ENCODE measurements at regions of chr4 and their contacts with region 1.

Region 1: GRCh38 chr4:83124111-83124780 is 9.7 kb upstream of the PLAC8 start:
- DNase-seq: no peak
- ATAC-seq: peak; percentile 93
- H3K4me3 Mint-ChIP-seq: peak overlapping the region; percentile 56
- H3K27ac Mint-ChIP-seq: peak overlapping the region; percentile 81
- H3K4me1 Mint-ChIP-seq: peaks cover 47% of the 10 kb centered on the region
- H3K27me3 Mint-ChIP-seq: no peaks in the 10 kb centered on the region
- CTCF ChIP-seq: no peak

Region 2: DNA sequence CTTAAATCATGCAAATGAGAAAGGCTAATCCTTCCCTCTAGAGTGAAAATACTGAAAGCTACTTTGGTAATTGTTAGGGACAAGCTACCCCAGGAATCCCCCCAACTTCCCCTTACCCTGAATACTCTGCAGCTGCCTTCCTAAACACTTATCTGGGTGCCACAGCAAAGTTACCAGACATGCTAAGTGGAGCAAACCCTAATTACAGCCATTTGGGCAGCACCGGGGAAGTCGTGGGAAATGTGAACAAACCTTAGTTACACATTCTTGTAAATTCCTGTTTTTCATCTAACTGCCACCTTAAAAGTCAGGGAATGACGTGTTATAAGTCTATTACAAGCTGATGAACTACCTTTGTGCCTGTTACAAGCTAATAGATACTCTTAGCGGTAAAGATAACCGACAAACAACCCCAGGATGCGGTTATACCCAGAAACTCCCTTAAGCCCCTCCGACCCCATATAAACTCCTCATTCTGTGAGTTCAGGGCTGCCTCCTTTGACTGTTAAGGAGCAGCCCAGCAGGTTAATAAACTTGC is 56.3 kb after region 1 on chr4:
- CTCF ChIA-PET with region 1: no interaction called
- POLR2A ChIA-PET with region 1: interaction called, 11 read pairs
- intact Hi-C with region 1: no loop called
- DNase-seq: no peak
- ATAC-seq: peak; percentile 83
- H3K4me3 Mint-ChIP-seq: peak overlapping the region; percentile 59
- H3K27ac Mint-ChIP-seq: peak overlapping the region; percentile 90
- H3K4me1 Mint-ChIP-seq: peaks cover 52% of the 10 kb centered on the region
- H3K27me3 Mint-ChIP-seq: no peaks in the 10 kb centered on the region
- CTCF ChIP-seq: no peak